ENCODE measurements at regions of chr4 and their contacts with region 1.

Region 1: DNA sequence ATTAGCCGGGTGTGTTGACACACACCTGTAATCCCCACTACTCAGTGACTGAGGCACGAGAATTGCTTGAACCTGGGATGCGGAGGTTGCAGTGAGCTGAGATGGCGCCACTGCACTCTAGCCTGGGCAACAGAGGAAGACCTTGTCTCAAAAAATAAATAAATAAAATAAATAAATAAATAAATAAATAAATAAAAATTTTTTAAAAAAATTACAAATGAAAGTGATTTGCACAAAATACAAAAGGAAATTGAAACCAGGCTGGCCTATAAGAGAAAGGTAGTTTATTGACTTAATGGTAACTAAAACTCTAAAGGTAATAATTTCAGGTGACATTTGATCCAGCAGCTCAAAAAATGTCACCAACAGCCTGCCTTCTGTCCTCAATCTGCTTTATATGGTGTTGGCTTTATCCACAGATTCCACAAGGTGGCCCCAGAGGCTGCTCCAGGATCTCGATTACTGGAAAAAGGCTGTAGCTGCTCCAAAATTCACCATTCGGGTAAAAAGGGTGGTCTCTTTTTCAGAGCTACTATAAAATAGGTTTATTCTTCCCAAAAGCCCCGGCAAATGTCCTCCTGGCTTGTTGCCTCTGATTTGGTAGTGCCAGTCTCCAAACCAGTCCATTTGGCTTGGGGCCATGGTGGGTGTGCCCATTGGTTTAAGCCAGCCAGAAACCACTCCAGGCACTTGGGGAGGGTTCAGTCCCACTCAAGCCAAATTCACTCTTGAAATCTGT is 61.4 kb upstream of the TRIM2 start:
- DNase-seq: peak; percentile 79
- H3K4me3 ChIP-seq: no peak overlapping the region
- H3K27ac ChIP-seq: no peak overlapping the region
- H3K4me1 ChIP-seq: peaks cover 14% of the 10 kb centered on the region
- H3K27me3 ChIP-seq: no peaks in the 10 kb centered on the region
- CTCF ChIP-seq: peak; percentile 80
- POLR2A ChIP-seq: no peak

Region 2: DNA sequence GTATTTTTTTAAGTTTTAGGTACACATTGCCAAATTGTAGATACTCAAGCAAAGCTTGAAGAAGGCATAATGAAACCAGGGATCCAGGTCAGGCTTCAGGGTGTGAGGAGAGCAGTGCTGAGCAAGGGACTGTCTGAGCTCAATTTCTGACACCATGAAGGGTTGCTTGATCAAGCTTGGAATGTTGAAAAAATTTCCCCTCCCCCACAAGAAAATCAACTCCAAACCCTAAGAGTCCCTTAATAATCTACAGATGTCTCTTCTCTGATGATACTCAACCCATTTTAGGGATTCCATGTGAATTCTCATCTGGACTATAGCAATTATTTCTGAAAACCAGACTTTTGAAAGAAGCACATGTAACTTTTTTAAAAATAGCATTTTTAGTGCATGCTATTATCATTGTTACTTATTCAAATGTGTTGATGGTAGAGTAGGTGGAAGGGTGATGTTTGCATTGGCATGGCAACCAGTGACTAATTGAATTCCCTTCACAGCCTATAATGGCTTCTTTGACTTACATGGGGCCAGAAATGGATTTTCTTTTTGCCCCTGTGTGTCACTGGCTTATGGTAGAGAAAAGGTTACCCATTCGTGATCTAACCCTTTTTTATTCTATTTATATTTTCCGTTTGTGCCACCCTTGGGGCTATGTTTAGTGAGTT is 858.9 kb before region 1 on chr4:
- CTCF ChIA-PET with region 1: no interaction called
- POLR2A ChIA-PET with region 1: no interaction called
- dilution Hi-C with region 1: no loop called
- intact Hi-C with region 1: no loop called
- DNase-seq: peak; percentile 16
- H3K4me3 ChIP-seq: no peak overlapping the region
- H3K27ac ChIP-seq: no peak overlapping the region
- H3K4me1 ChIP-seq: no peaks in the 10 kb centered on the region
- H3K27me3 ChIP-seq: no peaks in the 10 kb centered on the region
- CTCF ChIP-seq: no peak
- POLR2A ChIP-seq: no peak

Region 3: DNA sequence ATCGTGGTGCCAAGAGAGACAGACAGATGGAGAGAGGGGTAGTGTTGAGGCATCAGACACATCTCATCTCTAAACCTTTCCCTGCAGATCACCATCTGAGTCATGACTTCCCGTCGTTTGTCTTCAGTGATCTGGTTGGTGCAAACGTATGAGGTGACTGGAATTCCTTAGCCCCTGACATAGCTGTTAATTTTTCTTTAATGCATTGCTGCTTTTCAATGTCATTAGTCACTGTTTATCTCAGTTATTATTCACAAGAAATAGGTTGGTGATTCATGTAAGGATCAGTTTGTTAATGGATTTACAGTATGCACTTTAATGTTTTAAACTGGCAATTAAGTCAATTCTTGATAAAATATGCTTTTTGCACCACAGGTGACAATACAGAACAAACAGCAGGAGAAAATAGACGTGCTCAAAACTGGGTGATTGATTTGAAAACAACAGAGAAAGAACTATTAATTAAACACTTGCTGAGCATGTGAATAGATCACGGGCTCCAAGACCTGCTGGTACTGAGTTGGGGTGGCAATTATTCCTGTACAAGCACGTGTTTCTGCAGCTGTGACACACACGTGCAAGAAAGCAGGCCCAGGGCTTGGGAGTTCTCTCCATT is 461.8 kb before region 1 on chr4:
- CTCF ChIA-PET with region 1: no interaction called
- POLR2A ChIA-PET with region 1: no interaction called
- dilution Hi-C with region 1: no loop called
- intact Hi-C with region 1: no loop called
- DNase-seq: peak; percentile 82
- H3K4me3 ChIP-seq: no peak overlapping the region
- H3K27ac ChIP-seq: peak overlapping the region; percentile 85
- H3K4me1 ChIP-seq: peaks cover 44% of the 10 kb centered on the region
- H3K27me3 ChIP-seq: no peaks in the 10 kb centered on the region
- CTCF ChIP-seq: no peak
- POLR2A ChIP-seq: no peak

Region 4: GRCh38 chr4:153159728-153160221 is 16.9 kb after region 1 on chr4:
- CTCF ChIA-PET with region 1: interaction called, 12 read pairs
- POLR2A ChIA-PET with region 1: no interaction called
- dilution Hi-C with region 1: no loop called
- intact Hi-C with region 1: no loop called
- DNase-seq: peak; percentile 84
- H3K4me3 ChIP-seq: peak overlapping the region in 1 of 3 experiments; percentile 7
- H3K27ac ChIP-seq: peak overlapping the region; percentile 38
- H3K4me1 ChIP-seq: peaks cover 10% of the 10 kb centered on the region
- H3K27me3 ChIP-seq: peaks cover 17 to 34% of the 10 kb centered on the region in 2 experiments
- CTCF ChIP-seq: no peak
- POLR2A ChIP-seq: no peak

Region 5: GRCh38 chr4:153249199-153250041 is 106.6 kb after region 1 on chr4:
- CTCF ChIA-PET with region 1: interaction called, 8 read pairs
- POLR2A ChIA-PET with region 1: no interaction called
- dilution Hi-C with region 1: no loop called
- intact Hi-C with region 1: loop called (anchors 1 kb)
- DNase-seq: peak; percentile 78
- H3K4me3 ChIP-seq: peak overlapping the region; percentile 55 to 68 (median 60)
- H3K27ac ChIP-seq: peak overlapping the region; percentile 30
- H3K4me1 ChIP-seq: peaks cover 9% of the 10 kb centered on the region
- H3K27me3 ChIP-seq: no peaks in the 10 kb centered on the region
- CTCF ChIP-seq: no peak
- POLR2A ChIP-seq: no peak

Region 6: GRCh38 chr4:153318696-153319320 is 175.9 kb after region 1 on chr4:
- CTCF ChIA-PET with region 1: interaction called, 69 read pairs
- POLR2A ChIA-PET with region 1: no interaction called
- dilution Hi-C with region 1: no loop called
- intact Hi-C with region 1: loop called (anchors 1 kb)
- DNase-seq: peak; percentile 62
- H3K4me3 ChIP-seq: no peak overlapping the region
- H3K27ac ChIP-seq: no peak overlapping the region
- H3K4me1 ChIP-seq: no peaks in the 10 kb centered on the region
- H3K27me3 ChIP-seq: no peaks in the 10 kb centered on the region
- CTCF ChIP-seq: peak; percentile 55 to 62
- POLR2A ChIP-seq: no peak

Region 7: GRCh38 chr4:153432968-153433753 is 290.3 kb after region 1 on chr4:
- CTCF ChIA-PET with region 1: interaction called, 4 read pairs
- POLR2A ChIA-PET with region 1: no interaction called
- dilution Hi-C with region 1: no loop called
- intact Hi-C with region 1: loop called (anchors 1 kb)
- DNase-seq: peak; percentile 45
- H3K4me3 ChIP-seq: no peak overlapping the region
- H3K27ac ChIP-seq: no peak overlapping the region
- H3K4me1 ChIP-seq: no peaks in the 10 kb centered on the region
- H3K27me3 ChIP-seq: no peaks in the 10 kb centered on the region
- CTCF ChIP-seq: peak; percentile 45 to 46
- POLR2A ChIP-seq: no peak

Region 8: GRCh38 chr4:153620352-153620751 is 477.5 kb after region 1 on chr4:
- CTCF ChIA-PET with region 1: no interaction called
- POLR2A ChIA-PET with region 1: no interaction called
- dilution Hi-C with region 1: no loop called
- intact Hi-C with region 1: no loop called
- DNase-seq: peak; percentile 12
- H3K4me3 ChIP-seq: no peak overlapping the region
- H3K27ac ChIP-seq: no peak overlapping the region
- H3K4me1 ChIP-seq: peaks cover 11% of the 10 kb centered on the region
- H3K27me3 ChIP-seq: no peaks in the 10 kb centered on the region
- CTCF ChIP-seq: no peak
- POLR2A ChIP-seq: no peak

Region 9: DNA sequence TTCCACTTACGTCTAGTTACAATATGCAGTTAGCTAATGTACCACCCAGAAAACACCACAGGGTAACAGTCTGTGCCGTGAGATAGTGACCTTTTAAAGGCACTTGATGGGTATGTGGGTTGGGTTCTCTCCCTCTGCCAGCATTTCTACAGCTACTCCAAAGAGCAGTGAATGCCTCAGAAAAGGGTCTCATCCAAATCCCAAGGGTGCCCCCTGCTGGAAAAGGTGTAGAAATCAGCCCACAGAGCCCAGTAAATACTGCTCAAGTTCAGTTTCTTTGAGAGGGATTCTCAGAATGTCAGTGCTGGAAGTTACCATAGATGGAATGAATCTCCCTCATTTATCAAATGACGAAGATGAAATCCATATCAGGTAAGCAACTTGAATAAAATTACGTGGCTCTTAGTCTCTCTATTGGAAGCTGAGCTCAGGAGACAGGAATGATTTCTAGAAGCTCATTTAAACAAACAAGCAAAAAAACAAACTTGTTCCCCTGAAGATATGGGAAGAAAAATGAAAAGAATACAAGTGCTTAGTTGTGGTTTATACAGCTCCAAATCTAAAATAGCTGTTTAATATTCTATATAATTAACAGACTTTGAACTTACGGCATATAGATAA is 607.4 kb after region 1 on chr4:
- CTCF ChIA-PET with region 1: interaction called, 13 read pairs
- POLR2A ChIA-PET with region 1: no interaction called
- dilution Hi-C with region 1: no loop called
- intact Hi-C with region 1: loop called (anchors 1 kb)
- DNase-seq: peak; percentile 69
- H3K4me3 ChIP-seq: no peak overlapping the region
- H3K27ac ChIP-seq: no peak overlapping the region
- H3K4me1 ChIP-seq: no peaks in the 10 kb centered on the region
- H3K27me3 ChIP-seq: peaks cover 3 to 7% of the 10 kb centered on the region in 2 experiments
- CTCF ChIP-seq: peak; percentile 70 to 75
- POLR2A ChIP-seq: no peak